GM12878 (cell line): ENCODE measurements at regions of chr10 and their contacts with region 1.

Region 1: GRCh38 chr10:29590915-29591650 is 43.7 kb downstream of the SVIL start:
- DNase-seq: no peak
- ATAC-seq: peak; percentile 11; the same call in 1 of the 3 replicates
- H3K4me3 ChIP-seq: no peak overlapping the region
- H3K27ac ChIP-seq: no peak overlapping the region
- H3K4me1 ChIP-seq: no peaks in the 10 kb centered on the region
- H3K27me3 ChIP-seq: no peaks in the 10 kb centered on the region
- CTCF ChIP-seq: no peak
- EP300 ChIP-seq: no peak
- POLR2A ChIP-seq: no peak
- RAD21 ChIP-seq: no peak

Region 2: GRCh38 chr10:29443745-29444523 is 147.1 kb before region 1 on chr10:
- CTCF ChIA-PET with region 1: interaction called, 7 read pairs
- POLR2A ChIA-PET with region 1: no interaction called
- RAD21 ChIA-PET with region 1: interaction called, 6 read pairs
- SMC1A ChIA-PET with region 1: no interaction called
- in situ Hi-C with region 1: no loop called
- intact Hi-C with region 1: loop called (anchors 5 kb)
- DNase-seq: no peak
- ATAC-seq: peak; percentile 41
- H3K4me3 ChIP-seq: no peak overlapping the region
- H3K27ac ChIP-seq: no peak overlapping the region
- H3K4me1 ChIP-seq: no peaks in the 10 kb centered on the region
- H3K27me3 ChIP-seq: no peaks in the 10 kb centered on the region
- CTCF ChIP-seq: no peak
- EP300 ChIP-seq: no peak
- POLR2A ChIP-seq: no peak
- RAD21 ChIP-seq: no peak

Region 3: DNA sequence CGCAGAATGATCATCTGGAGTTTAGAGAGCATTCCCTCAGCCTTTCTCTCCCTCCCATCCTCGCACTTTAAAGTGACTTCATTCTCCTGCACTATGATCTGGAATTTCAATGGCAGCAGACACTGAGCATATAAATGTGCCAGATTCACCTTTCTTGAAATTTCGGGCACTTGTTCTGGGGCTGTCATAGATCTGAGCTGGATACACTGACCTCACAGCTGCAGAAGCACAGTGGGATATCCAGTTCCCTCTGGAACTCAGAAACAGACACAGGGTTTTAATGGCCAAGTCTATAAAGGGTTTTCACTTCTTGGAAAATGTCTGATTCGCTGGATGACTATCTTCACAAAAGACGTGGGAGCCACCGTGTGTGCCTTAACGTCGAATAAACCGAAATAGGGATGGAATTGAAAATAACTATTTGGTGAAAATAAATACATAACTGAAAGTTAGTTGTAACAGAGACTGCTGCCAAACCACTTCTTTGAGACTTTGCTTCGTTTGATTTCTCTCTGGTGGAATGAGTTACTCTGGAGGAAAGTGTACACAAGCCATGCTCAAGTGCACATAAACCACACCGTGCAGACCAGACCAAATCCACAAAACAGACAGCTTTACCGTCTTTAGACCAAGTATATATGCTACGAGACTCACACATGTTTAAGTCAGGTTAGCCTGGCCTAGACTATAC is 82.4 kb before region 1 on chr10:
- CTCF ChIA-PET with region 1: interaction called, 5 read pairs
- POLR2A ChIA-PET with region 1: no interaction called
- RAD21 ChIA-PET with region 1: interaction called, 11 read pairs
- SMC1A ChIA-PET with region 1: interaction called, 6 read pairs
- in situ Hi-C with region 1: no loop called
- intact Hi-C with region 1: loop called (anchors 5 kb)
- DNase-seq: no peak
- ATAC-seq: no peak; the same call in 2 of the 3 replicates
- H3K4me3 ChIP-seq: no peak overlapping the region
- H3K27ac ChIP-seq: no peak overlapping the region
- H3K4me1 ChIP-seq: no peaks in the 10 kb centered on the region
- H3K27me3 ChIP-seq: no peaks in the 10 kb centered on the region
- CTCF ChIP-seq: no peak
- EP300 ChIP-seq: no peak
- POLR2A ChIP-seq: no peak
- RAD21 ChIP-seq: no peak

Region 4: GRCh38 chr10:29535012-29535777 is 55.9 kb before region 1 on chr10:
- CTCF ChIA-PET with region 1: interaction called, 12 read pairs
- POLR2A ChIA-PET with region 1: interaction called, 3 read pairs
- RAD21 ChIA-PET with region 1: no interaction called
- SMC1A ChIA-PET with region 1: no interaction called
- in situ Hi-C with region 1: no loop called
- intact Hi-C with region 1: loop called (anchors 5 kb)
- DNase-seq: no peak
- ATAC-seq: peak; percentile 46
- H3K4me3 ChIP-seq: no peak overlapping the region
- H3K27ac ChIP-seq: no peak overlapping the region
- H3K4me1 ChIP-seq: no peaks in the 10 kb centered on the region
- H3K27me3 ChIP-seq: no peaks in the 10 kb centered on the region
- CTCF ChIP-seq: peak; percentile 24 to 40 (median 25); a peak in 4 of 6 replicates
- EP300 ChIP-seq: no peak
- POLR2A ChIP-seq: no peak
- RAD21 ChIP-seq: no peak

Region 5: GRCh38 chr10:29569795-29570194 is 21.3 kb before region 1 on chr10:
- CTCF ChIA-PET with region 1: interaction called, 27 read pairs
- POLR2A ChIA-PET with region 1: no interaction called
- RAD21 ChIA-PET with region 1: no interaction called
- SMC1A ChIA-PET with region 1: interaction called, 3 read pairs
- in situ Hi-C with region 1: no loop called
- intact Hi-C with region 1: no loop called
- DNase-seq: no peak
- ATAC-seq: no peak
- H3K4me3 ChIP-seq: no peak overlapping the region
- H3K27ac ChIP-seq: no peak overlapping the region
- H3K4me1 ChIP-seq: no peaks in the 10 kb centered on the region
- H3K27me3 ChIP-seq: no peaks in the 10 kb centered on the region
- CTCF ChIP-seq: no peak
- EP300 ChIP-seq: no peak
- POLR2A ChIP-seq: no peak
- RAD21 ChIP-seq: no peak

Region 6: GRCh38 chr10:29618341-29619171 is 27.5 kb after region 1 on chr10:
- CTCF ChIA-PET with region 1: interaction called, 4 read pairs
- POLR2A ChIA-PET with region 1: interaction called, 3 read pairs
- RAD21 ChIA-PET with region 1: interaction called, 3 read pairs
- SMC1A ChIA-PET with region 1: interaction called, 11 read pairs
- in situ Hi-C with region 1: no loop called
- intact Hi-C with region 1: no loop called
- DNase-seq: no peak
- ATAC-seq: peak; percentile 36
- H3K4me3 ChIP-seq: no peak overlapping the region
- H3K27ac ChIP-seq: no peak overlapping the region
- H3K4me1 ChIP-seq: no peaks in the 10 kb centered on the region
- H3K27me3 ChIP-seq: no peaks in the 10 kb centered on the region
- CTCF ChIP-seq: no peak
- EP300 ChIP-seq: no peak
- POLR2A ChIP-seq: no peak
- RAD21 ChIP-seq: no peak

Region 7: DNA sequence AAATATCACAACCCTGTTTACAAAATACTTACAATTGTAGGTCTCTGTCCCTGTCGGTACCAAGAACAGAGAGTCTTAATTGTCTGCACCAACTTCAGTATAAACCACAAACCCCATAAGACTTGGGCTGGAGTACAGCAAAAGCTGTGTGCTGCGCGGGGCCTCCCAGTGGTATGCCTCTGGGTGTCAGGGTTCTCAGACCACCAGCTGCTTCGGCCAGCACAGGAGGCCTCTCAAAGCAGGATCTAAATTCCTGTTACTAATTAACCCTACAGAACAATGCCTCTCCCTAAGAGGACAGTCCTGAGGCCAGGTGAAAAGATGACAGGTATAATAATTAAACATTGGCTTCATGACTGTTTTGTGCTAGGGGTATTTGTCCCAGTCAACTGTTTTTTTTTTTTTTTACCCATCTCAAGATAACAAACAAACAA is 44.6 kb after region 1 on chr10:
- CTCF ChIA-PET with region 1: interaction called, 6 read pairs
- POLR2A ChIA-PET with region 1: no interaction called
- RAD21 ChIA-PET with region 1: interaction called, 3 read pairs
- SMC1A ChIA-PET with region 1: no interaction called
- in situ Hi-C with region 1: no loop called
- intact Hi-C with region 1: loop called (anchors 5 kb)
- DNase-seq: peak; percentile 27
- ATAC-seq: peak; percentile 86
- H3K4me3 ChIP-seq: no peak overlapping the region
- H3K27ac ChIP-seq: no peak overlapping the region
- H3K4me1 ChIP-seq: no peaks in the 10 kb centered on the region
- H3K27me3 ChIP-seq: no peaks in the 10 kb centered on the region
- CTCF ChIP-seq: no peak
- EP300 ChIP-seq: no peak
- POLR2A ChIP-seq: no peak
- RAD21 ChIP-seq: no peak